Left colon (tissue), 2 donors: ENCODE measurements at regions of chr14 and their contacts with region 1.

Region 1: DNA sequence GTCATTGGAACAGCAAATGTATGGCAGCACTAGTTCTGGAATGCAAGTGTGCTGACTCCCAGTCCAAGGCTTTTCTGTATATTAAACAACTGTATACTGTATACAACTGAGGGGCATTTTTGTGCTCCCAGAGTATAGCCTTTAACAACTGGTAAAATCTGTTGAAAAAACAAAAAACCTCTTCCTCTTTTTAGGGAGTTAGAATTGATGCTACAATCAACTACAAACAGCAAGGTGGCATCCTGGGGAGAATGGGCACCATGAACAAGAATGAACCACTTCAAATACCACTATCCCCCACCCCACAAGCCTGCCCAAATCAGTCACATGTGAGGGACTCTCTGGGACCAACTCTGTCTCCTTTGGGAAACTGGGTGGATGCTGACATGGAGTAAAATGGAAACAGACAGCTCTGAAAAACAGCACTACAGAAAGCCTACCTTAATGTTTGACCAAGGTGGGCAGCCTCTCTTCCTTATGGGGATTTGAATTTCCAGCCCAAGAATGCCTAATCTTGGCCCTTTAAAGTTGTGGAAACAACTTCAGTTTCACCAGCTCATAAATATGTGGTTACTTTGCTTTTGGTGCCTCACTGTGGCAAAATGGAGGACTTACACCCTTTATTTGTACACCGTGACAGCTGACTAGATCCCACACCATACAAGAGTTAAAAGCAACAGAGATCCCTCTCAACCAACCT is 7.5 kb downstream of the VTI1B start:
- DNase-seq: no peak
- ATAC-seq: peak; percentile 81

Region 2: GRCh38 chr14:67619446-67620216 is 47.3 kb before region 1 on chr14 and contains the start of gene ARG2:
- intact Hi-C with region 1: loop called in 1 of 2 experiments (anchors 2 kb)
- DNase-seq: peak; percentile 99 to 100
- ATAC-seq: peak; percentile 96
- total RNA-seq, gene ARG2: 0.85 to 18.1 TPM

Region 3: GRCh38 chr14:67749341-67750084 is 82.6 kb after region 1 on chr14:
- intact Hi-C with region 1: no loop called
- DNase-seq: no peak
- ATAC-seq: no peak